ENCODE measurements at regions of chr11 and their contacts with region 1.

Region 1: GRCh38 chr11:65888163-65888814 is at the start of gene FIBP:
- DNase-seq: peak; percentile 98
- H3K4me3 Mint-ChIP-seq: peak within 1 kb of the TSS; percentile 97
- H3K27ac Mint-ChIP-seq: peak within 1 kb of the TSS; percentile 90
- H3K4me1 Mint-ChIP-seq: peaks cover 74% of the 10 kb centered on the region
- H3K27me3 Mint-ChIP-seq: no peaks in the 10 kb centered on the region
- total RNA-seq, gene FIBP: 71.7 to 77.4 TPM

Region 2: GRCh38 chr11:65560555-65561418 is 327.5 kb before region 1 on chr11:
- CTCF ChIA-PET with region 1: no interaction called
- POLR2A ChIA-PET with region 1: no interaction called
- DNase-seq: no peak
- H3K4me3 Mint-ChIP-seq: no peak overlapping the region
- H3K27ac Mint-ChIP-seq: no peak overlapping the region
- H3K4me1 Mint-ChIP-seq: peaks cover 53% of the 10 kb centered on the region
- H3K27me3 Mint-ChIP-seq: no peaks in the 10 kb centered on the region

Region 3: DNA sequence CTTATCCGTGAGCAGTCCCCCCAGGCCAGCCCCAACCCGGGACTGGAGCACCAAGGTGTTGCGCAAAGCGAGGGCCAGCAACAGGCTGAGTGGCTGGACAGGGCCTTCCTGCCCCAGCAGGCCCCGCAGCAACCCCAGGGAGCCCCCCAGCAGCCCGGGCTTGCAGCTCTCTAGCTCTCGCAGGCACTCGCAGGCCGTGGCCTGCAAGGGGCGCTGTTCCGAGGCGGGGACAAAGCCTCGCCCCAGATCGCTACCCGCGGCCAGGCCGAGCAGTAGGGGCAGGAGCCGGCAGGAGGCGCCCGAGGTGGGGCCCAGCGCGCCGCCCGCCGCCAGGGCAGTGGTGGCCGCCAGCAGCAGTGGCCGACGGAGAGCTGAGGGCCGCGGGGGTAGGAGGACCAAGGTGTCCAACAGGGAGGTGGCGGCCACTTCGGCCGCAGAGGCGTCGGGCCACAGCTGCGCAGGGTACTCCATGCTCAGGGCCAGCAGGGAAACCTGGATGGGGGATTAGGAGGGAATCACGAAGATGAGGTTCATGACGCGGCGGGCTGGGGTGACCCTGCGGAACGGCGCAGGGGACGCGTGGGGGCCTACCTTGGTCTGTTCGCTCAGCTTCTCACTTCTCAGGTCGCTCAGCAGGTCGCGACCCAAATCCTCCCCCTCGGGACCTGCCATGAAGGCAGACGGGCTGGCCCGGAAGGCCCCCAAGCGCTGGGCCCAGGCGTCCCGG is 108.3 kb before region 1 on chr11:
- CTCF ChIA-PET with region 1: interaction called, 26 read pairs
- POLR2A ChIA-PET with region 1: interaction called, 7 read pairs
- DNase-seq: peak; percentile 88
- H3K4me3 Mint-ChIP-seq: peak overlapping the region; percentile 86
- H3K27ac Mint-ChIP-seq: peak overlapping the region; percentile 74
- H3K4me1 Mint-ChIP-seq: peaks cover 23% of the 10 kb centered on the region
- H3K27me3 Mint-ChIP-seq: peaks cover 17% of the 10 kb centered on the region

Region 4: DNA sequence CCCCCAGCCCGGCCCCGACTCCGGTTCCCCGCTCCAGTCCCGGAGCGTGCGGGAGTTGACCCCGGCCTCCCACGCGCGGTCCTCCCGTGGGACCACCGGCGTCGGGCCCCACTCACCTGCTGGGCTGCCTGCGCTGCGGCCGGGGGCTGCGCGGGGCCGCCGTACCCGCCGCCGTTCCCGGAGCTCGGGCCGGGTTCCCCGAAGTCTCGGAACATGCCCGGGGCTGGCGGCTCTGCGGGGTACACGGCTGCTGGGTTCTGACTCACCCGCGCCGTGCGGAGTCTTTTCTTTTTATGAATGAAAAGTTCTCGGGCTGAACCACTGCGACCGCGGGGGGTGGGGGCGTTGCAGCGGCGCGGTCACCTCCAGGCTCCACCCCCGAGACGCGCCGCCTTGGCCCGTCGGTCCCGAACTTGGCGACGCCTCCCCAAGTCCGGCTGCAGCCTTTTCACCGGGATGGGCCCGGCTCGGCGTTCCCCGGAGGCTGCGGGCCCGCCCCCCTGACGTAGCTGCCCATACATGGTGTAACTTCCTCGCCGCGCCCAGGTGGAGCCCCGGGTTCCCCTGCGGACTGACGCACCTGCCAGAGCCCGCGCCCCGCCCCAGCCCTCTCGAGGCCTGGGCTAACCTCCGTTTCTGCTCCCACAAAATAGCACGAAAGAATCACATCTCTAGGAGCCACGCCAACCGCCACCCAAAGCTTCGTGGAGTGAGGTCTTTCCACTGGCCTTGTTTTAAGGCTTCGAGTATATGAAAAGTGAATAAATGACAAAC is 12.0 kb after region 1 on chr11 and contains the start of gene FOSL1:
- CTCF ChIA-PET with region 1: interaction called, 73 read pairs
- POLR2A ChIA-PET with region 1: interaction called, 185 read pairs
- DNase-seq: peak; percentile 93
- H3K4me3 Mint-ChIP-seq: peak within 1 kb of the TSS; percentile 69
- H3K27ac Mint-ChIP-seq: peak within 1 kb of the TSS; percentile 73
- H3K4me1 Mint-ChIP-seq: peaks cover 55% of the 10 kb centered on the region
- H3K27me3 Mint-ChIP-seq: peaks cover 4% of the 10 kb centered on the region
- total RNA-seq, gene FOSL1: 4.5 to 5.0 TPM

Region 5: GRCh38 chr11:65927904-65928397 is 39.7 kb after region 1 on chr11:
- CTCF ChIA-PET with region 1: interaction called, 43 read pairs
- POLR2A ChIA-PET with region 1: interaction called, 35 read pairs
- DNase-seq: peak; percentile 87
- H3K4me3 Mint-ChIP-seq: peak overlapping the region; percentile 69
- H3K27ac Mint-ChIP-seq: peak overlapping the region; percentile 95
- H3K4me1 Mint-ChIP-seq: peaks cover 48% of the 10 kb centered on the region
- H3K27me3 Mint-ChIP-seq: no peaks in the 10 kb centered on the region

Region 6: DNA sequence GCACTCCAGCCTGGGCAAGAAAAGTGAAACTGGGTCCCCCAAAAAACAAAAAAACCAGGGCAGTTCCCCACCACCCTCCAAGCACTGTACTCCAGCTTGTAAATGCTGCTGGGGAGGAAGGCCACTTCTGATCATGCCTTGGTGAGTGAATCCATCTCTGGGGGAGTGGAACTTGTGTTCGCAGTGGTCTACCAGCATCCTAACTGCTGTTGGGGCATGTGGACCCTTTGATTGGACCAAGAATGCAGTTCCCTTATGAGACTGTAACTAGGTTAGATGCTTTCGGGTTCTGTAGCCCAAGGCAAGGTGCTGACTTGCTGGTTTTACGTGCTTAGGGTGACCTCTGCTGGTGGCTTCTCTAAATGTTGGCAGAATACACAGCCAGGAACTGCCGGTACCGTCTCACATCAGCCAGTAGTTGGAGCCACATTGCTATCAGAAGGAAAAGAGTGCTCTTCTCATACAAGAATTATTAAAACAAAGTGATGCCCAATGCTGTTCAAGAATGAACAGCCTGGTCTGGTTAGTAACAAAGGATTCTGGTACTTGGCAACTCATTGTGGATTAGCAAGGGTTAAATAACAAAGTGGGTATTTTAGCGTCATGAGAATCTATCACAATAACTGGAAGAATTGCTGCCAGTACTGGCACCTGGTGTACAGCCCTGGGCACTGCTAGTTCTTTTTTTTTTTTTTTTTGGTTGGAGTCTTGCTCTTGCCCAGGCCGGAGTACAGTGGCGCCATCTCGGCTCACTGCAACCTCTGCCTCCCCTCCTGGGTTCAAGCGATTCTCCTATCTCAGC is 100.7 kb after region 1 on chr11:
- CTCF ChIA-PET with region 1: interaction called, 46 read pairs
- POLR2A ChIA-PET with region 1: interaction called, 10 read pairs
- DNase-seq: peak; percentile 94
- H3K4me3 Mint-ChIP-seq: no peak overlapping the region
- H3K27ac Mint-ChIP-seq: peak overlapping the region; percentile 73
- H3K4me1 Mint-ChIP-seq: peaks cover 5% of the 10 kb centered on the region
- H3K27me3 Mint-ChIP-seq: no peaks in the 10 kb centered on the region

Region 7: DNA sequence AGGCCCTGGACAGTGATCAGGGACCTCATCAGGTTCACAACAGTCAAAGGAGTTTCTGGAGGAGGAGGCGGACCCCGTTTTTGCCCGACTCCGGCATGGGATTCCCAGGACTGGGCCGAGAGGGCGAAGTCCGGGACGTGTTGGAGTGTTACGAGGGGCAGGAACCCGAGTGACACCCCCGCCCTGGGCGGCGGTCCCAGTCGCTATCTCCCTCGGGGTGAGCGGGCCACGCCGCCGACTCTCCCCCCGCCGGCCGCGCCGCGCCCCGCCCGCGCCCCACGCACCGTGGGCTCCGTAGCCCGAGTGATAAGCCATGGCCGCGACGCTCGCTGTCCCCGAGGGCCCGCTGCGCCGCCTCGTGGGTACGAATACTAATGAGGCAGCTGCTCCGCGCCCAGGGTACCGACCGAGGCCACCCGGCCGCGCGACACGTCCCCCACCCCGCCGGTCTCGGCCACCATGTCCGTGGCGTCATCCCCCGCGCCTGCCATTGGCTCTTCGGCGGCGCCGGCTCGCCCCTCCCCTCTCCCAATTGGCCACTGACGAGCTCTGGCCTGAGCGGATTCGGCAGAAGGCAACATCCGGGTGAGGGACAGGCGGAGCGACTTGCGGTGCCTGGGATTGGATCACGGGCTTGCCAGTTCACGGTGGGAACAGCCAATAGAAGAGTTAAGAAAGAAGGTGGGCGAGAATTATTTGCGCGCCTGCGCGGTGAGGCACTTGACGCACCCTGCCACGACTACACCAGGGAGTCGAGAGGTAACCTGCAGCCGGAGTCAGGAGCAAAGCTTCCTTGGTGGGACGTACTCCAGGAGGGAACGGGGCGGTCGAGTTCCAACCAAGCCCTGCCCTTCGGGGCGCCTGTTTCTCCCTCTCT is 400.6 kb after region 1 on chr11 and contains the start of gene YIF1A:
- CTCF ChIA-PET with region 1: no interaction called
- POLR2A ChIA-PET with region 1: no interaction called
- DNase-seq: peak; percentile 99
- H3K4me3 Mint-ChIP-seq: peak within 1 kb of the TSS; percentile 92
- H3K27ac Mint-ChIP-seq: peak within 1 kb of the TSS; percentile 83
- H3K4me1 Mint-ChIP-seq: peaks cover 42% of the 10 kb centered on the region
- H3K27me3 Mint-ChIP-seq: peaks cover 27% of the 10 kb centered on the region
- total RNA-seq, gene YIF1A: 49.5 to 52.5 TPM